ENCODE measurements at regions of chr1 and their contacts with region 1.

Region 1: DNA sequence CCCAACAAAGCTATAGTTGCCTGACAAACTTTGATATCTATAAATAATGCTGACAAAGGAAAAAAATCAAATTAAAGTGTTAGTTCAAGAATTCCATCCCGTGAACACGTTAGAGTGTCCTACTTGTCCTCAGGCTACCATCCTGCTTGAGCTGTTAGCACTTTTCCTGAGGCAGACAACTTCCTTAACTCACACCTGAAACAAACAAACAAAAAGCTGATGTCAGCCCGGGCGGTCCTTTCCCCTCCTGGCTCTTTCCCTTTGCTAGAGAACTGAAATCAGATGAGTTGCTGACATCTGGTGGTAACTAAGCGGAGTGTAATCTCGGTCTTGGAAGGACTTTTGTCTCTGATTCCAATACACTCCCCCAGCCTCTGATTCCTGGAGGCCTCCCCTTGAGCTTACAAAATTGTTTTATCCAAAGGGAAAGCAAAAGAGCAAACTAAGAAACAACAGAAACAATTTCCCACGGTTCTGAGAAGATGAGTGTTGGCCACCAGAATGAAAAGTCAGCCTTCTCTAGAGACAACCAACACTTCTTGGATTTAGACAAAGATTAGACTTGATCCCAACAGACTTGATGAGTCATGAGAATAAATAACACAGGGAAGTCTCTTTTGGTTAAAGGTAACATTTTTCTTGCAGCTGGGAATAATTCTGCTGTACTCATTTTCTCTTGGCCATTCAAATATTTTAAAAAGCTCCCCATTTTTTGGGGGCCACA is 135.4 kb downstream of the PROX1 start:
- DNase-seq: peak; percentile 86
- ATAC-seq: peak; percentile 96
- H3K4me3 ChIP-seq: no peak overlapping the region
- H3K27ac ChIP-seq: no peak overlapping the region
- H3K4me1 ChIP-seq: peaks cover 11% of the 10 kb centered on the region
- H3K27me3 ChIP-seq: peaks cover 33% of the 10 kb centered on the region; the same call in 1 of the 2 replicates
- CTCF ChIP-seq: peak; percentile 89

Region 2: GRCh38 chr1:213131851-213132655 is 991.2 kb before region 1 on chr1:
- CTCF ChIA-PET with region 1: no interaction called
- POLR2A ChIA-PET with region 1: no interaction called
- intact Hi-C with region 1: loop called (anchors 2 kb)
- DNase-seq: peak; percentile 40
- ATAC-seq: peak; percentile 51
- H3K4me3 ChIP-seq: no peak overlapping the region
- H3K27ac ChIP-seq: no peak overlapping the region
- H3K4me1 ChIP-seq: peaks cover 14% of the 10 kb centered on the region
- H3K27me3 ChIP-seq: no peaks in the 10 kb centered on the region
- CTCF ChIP-seq: peak; percentile 61; the same call in 1 of the 2 replicates

Region 3: DNA sequence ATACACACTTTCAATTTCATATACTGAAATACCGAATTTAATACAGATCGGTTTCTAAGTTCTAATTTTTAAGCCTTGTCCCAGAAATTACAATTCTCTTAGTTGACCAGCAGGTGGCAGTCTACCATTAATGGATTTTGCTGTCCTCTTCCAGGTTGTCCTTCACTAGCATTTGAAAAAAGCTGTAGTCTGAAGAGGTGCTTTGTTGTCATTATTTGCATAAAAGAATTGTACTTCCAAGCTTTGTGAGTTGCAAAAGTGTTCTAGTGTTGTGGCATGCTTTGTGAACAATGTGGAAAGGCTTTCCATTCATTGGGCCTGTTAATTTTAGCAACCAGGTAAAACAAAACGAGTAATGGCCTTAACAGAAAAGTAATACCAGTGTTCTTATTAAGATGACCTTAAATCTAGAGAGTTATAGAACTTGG is 878.5 kb before region 1 on chr1:
- CTCF ChIA-PET with region 1: interaction called, 3 read pairs
- POLR2A ChIA-PET with region 1: no interaction called
- intact Hi-C with region 1: loop called (anchors 1 kb)
- DNase-seq: peak; percentile 75
- ATAC-seq: peak; percentile 70
- H3K4me3 ChIP-seq: no peak overlapping the region
- H3K27ac ChIP-seq: no peak overlapping the region
- H3K4me1 ChIP-seq: no peaks in the 10 kb centered on the region
- H3K27me3 ChIP-seq: no peaks in the 10 kb centered on the region
- CTCF ChIP-seq: peak; percentile 99

Region 4: GRCh38 chr1:213374369-213374768 is 748.9 kb before region 1 on chr1:
- CTCF ChIA-PET with region 1: no interaction called
- POLR2A ChIA-PET with region 1: no interaction called
- intact Hi-C with region 1: loop called (anchors 1 kb)
- DNase-seq: peak; percentile 90
- ATAC-seq: peak; percentile 86
- H3K4me3 ChIP-seq: no peak overlapping the region
- H3K27ac ChIP-seq: no peak overlapping the region
- H3K4me1 ChIP-seq: no peaks in the 10 kb centered on the region
- H3K27me3 ChIP-seq: peaks cover 29% of the 10 kb centered on the region; the same call in 1 of the 2 replicates
- CTCF ChIP-seq: peak; percentile 100

Region 5: GRCh38 chr1:213564215-213564659 is 559.0 kb before region 1 on chr1:
- CTCF ChIA-PET with region 1: no interaction called
- POLR2A ChIA-PET with region 1: no interaction called
- intact Hi-C with region 1: loop called (anchors 2 kb)
- DNase-seq: peak; percentile 68
- ATAC-seq: no peak; the same call in none of the 2 replicates
- H3K4me3 ChIP-seq: no peak overlapping the region
- H3K27ac ChIP-seq: no peak overlapping the region
- H3K4me1 ChIP-seq: no peaks in the 10 kb centered on the region
- H3K27me3 ChIP-seq: 0 out of 2 replicates have a peak, but pooled peaks cover 7% of the 10 kb centered on the region
- CTCF ChIP-seq: peak; percentile 86

Region 6: GRCh38 chr1:213987927-213988506 is 135.2 kb before region 1 on chr1 and contains the start of gene PROX1:
- CTCF ChIA-PET with region 1: interaction called, 10 read pairs
- POLR2A ChIA-PET with region 1: no interaction called
- intact Hi-C with region 1: loop called (anchors 2 kb)
- DNase-seq: peak; percentile 82
- ATAC-seq: peak; percentile 89
- H3K4me3 ChIP-seq: peak within 1 kb of the TSS; percentile 70
- H3K27ac ChIP-seq: no peak within 1 kb of the TSS
- H3K4me1 ChIP-seq: no peaks in the 10 kb centered on the region
- H3K27me3 ChIP-seq: peaks cover 96% of the 10 kb centered on the region
- CTCF ChIP-seq: 0 out of 2 replicates have a peak, but pooled peaks have one; percentile 10
- total RNA-seq, gene PROX1: 0.12 TPM in 1 of 2 replicates, not detected in the other